ENCODE measurements at regions of chr20 and their contacts with region 1.

Region 1: DNA sequence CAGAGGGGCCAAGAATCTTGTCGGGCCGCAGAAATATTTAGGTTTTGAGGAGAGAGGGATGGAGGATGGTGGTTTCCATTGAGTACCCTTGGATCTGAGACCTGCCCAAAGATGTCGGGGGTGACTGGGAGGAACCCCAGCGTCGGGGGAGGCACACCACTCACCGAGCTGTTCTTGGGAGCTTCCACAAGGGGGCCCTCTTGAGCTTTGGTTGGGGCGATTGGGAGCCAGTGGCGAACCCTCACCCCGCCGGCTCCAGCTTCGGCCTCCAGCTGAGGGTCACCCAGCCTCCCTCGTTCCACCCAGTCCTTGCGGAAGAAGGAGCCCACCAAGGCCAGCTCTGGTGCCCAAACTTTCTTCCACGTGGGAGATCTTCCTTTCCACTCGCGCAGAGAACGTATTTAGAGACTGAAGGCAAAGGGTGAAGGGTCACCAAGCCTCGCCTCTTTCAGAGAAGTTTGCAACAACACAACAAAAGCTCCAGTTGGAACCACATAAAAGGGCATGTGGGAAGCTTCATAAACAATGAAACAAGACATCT is 33.6 kb downstream of the APCDD1L start:
- DNase-seq: peak; percentile 41 to 88
- H3K4me3 ChIP-seq: no peak overlapping the region
- H3K4me1 ChIP-seq: peaks cover 7% of the 10 kb centered on the region
- H3K27me3 ChIP-seq: no peaks in the 10 kb centered on the region

Region 2: GRCh38 chr20:58839474-58839874 is 357.9 kb after region 1 on chr20:
- in situ Hi-C with region 1: loop called (anchors 5 kb)
- DNase-seq: peak; percentile 49 to 86
- H3K4me3 ChIP-seq: 0 out of 2 replicates have a peak overlapping the region, but pooled peaks have one; percentile 8
- H3K4me1 ChIP-seq: no peaks in the 10 kb centered on the region
- H3K27me3 ChIP-seq: peaks cover 51% of the 10 kb centered on the region

Measured in HAP-1 (cell line).